Body of pancreas (tissue), 4 donors: ENCODE measurements at regions of chr2 and their contacts with region 1.

Region 1: DNA sequence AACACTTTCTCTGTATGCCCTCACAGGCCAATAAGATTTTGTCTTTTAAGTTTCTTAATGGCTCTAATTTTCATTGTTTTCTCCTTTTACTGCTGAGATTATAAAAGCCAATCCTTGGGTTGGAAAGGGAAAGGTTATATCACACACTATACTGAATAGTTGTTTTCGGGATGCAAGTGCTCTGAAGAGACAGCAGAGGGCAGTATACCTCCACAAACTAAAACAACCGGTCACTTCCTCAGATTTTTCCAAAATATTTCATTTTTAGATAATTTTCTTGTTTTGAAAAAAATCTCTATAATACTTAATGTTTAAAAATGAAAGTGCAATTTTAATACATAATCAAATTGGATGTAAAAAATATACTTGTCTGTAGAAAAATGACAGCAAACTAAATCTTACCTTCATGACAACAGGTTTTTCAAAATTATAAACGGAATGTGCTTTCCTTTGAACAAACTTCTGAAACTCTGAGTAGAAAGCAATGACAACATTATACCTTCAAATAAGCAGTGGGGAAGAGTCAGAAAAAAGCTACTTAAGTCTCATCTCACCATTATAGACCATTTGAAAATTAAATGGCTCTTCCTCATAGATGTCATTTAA is 82.7 kb downstream of the ORC4 start:
- DNase-seq: no peak
- ATAC-seq: peak; percentile 75
- H3K4me3 ChIP-seq: no peak overlapping the region
- H3K27ac ChIP-seq: no peak overlapping the region
- H3K4me1 ChIP-seq: peaks cover 4% of the 10 kb centered on the region
- H3K27me3 ChIP-seq: no peaks in the 10 kb centered on the region
- CTCF ChIP-seq: peak; percentile 42 to 90 (median 76)
- POLR2A ChIP-seq: no peak

Region 2: GRCh38 chr2:147989809-147990403 is 52.1 kb after region 1 on chr2:
- intact Hi-C with region 1: no loop called
- DNase-seq: peak in 1 of 4 donors; percentile 18
- ATAC-seq: peak; percentile 71
- H3K4me3 ChIP-seq: no peak overlapping the region
- H3K27ac ChIP-seq: no peak overlapping the region
- H3K4me1 ChIP-seq: peaks cover 10% of the 10 kb centered on the region
- H3K27me3 ChIP-seq: no peaks in the 10 kb centered on the region
- CTCF ChIP-seq: peak; percentile 10 to 77 (median 59)
- POLR2A ChIP-seq: no peak

Region 3: GRCh38 chr2:148989882-148990493 is 1052.1 kb after region 1 on chr2:
- intact Hi-C with region 1: loop called (anchors 5 kb)
- DNase-seq: peak; percentile 64 to 83 (median 68)
- ATAC-seq: peak; percentile 81
- H3K4me3 ChIP-seq: no peak overlapping the region
- H3K27ac ChIP-seq: no peak overlapping the region
- H3K4me1 ChIP-seq: no peaks in the 10 kb centered on the region
- H3K27me3 ChIP-seq: no peaks in the 10 kb centered on the region
- CTCF ChIP-seq: peak; percentile 49 to 82 (median 72)
- POLR2A ChIP-seq: no peak